A549 (cell line): ENCODE measurements at regions of chr17 and their contacts with region 1.

Region 1: DNA sequence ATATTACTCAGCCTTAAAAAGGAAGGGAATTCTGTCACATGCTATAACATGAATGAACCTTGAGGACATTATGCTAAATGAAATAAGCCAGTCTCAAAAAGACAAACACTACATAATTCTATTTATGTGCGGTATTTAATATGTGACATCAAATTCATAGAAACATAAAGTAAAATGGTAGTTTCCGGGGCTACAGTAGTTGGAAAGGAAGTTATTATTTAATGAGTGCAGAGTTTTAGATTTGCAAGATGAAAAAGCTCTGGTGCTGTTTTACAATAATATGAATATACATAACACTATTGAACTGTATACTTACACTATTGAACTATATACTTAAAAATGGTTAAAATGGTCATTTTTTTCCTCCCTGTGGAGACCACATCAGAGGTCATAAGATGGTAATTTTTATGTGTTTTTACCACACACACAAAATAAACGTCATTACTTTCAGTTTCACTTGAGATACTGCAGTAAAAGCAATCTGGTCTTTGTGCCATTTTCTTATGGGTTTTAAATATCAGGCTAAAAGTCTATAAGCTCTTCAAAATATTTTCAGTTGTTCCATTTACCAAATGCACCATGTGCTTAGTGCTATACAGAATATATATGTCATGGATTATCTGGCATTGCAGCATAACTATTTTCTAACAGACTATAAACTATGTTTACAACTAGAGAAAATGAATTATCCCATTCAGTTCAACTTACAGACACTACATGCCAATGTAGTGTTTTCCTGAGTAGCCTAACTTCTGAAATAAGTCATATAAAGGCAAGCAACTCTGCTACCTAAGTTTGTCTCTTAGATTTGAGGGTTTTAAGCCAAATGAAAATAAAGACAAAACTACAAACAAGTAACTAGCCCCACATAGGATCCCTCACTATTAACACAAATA is 90.9 kb downstream of the SPAG9 start:
- DNase-seq: no peak
- ATAC-seq: no peak
- H3K4me3 ChIP-seq: no peak overlapping the region
- H3K27ac ChIP-seq: no peak overlapping the region
- H3K4me1 ChIP-seq: peaks cover 8% of the 10 kb centered on the region; the same call in 2 of the 3 replicates
- CTCF ChIP-seq: no peak
- EP300 ChIP-seq: no peak
- POLR2A ChIP-seq: no peak
- RAD21 ChIP-seq: no peak

Region 2: GRCh38 chr17:51046514-51047384 is 16.9 kb after region 1 on chr17:
- CTCF ChIA-PET with region 1: interaction called, 17 read pairs
- POLR2A ChIA-PET with region 1: no interaction called
- DNase-seq: peak in 1 of 2 experiments; percentile 26
- ATAC-seq: peak; percentile 43 to 75; a peak in 5 of 6 replicates
- H3K4me3 ChIP-seq: no peak overlapping the region
- H3K27ac ChIP-seq: no peak overlapping the region
- H3K4me1 ChIP-seq: peaks cover 9% of the 10 kb centered on the region; the same call in 2 of the 3 replicates
- CTCF ChIP-seq: no peak
- EP300 ChIP-seq: no peak
- POLR2A ChIP-seq: no peak
- RAD21 ChIP-seq: no peak